A549 (cell line): ENCODE measurements at regions of chr14 and their contacts with region 1.

Region 1: DNA sequence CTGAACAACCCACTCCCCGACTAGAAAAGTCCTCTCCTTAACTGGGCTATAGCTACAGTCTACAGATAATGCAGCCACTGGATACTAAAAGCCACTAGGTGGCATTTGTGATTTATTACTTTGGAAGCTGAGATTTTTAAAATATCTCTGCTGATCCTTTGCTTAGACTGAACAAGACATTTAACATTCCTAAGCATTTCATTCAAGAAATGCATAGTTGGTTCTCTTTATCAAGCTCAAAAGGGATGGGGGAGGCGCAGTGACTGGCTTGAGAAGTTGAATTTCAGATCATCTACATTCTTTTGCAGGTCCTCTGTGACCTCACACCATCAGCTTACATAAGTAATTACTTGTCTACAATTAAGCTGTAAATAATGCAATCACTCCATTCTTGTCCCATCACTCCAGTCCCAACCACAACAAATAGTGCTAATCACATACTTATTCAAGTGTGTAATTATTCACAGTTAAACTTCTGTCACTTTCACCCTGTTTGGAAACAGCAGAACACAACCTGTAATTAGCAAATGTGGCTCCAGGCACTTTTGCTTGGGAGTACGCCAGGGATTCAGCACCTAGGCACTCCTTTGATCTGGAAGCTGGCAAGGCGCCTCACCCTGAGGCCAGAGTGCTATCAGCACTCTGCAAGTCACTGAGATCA is 203.6 kb downstream of the NOVA1 start:
- DNase-seq: peak in 1 of 2 experiments; percentile 8
- ATAC-seq: peak; percentile 68 to 78; a peak in 4 of 6 replicates
- H3K4me3 ChIP-seq: no peak overlapping the region
- H3K27ac ChIP-seq: no peak overlapping the region
- H3K4me1 ChIP-seq: peaks cover 6% of the 10 kb centered on the region; the same call in 1 of the 3 replicates
- CTCF ChIP-seq: peak; percentile 56
- EP300 ChIP-seq: no peak
- POLR2A ChIP-seq: no peak
- RAD21 ChIP-seq: peak; percentile 61 to 67

Region 2: GRCh38 chr14:26370115-26370514 is 24.2 kb before region 1 on chr14:
- CTCF ChIA-PET with region 1: no interaction called
- POLR2A ChIA-PET with region 1: no interaction called
- DNase-seq: no peak
- ATAC-seq: no peak
- H3K4me3 ChIP-seq: no peak overlapping the region
- H3K27ac ChIP-seq: no peak overlapping the region
- H3K4me1 ChIP-seq: no peaks in the 10 kb centered on the region
- CTCF ChIP-seq: no peak
- EP300 ChIP-seq: no peak
- POLR2A ChIP-seq: no peak
- RAD21 ChIP-seq: no peak

Region 3: GRCh38 chr14:26984311-26985177 is 590.3 kb after region 1 on chr14:
- CTCF ChIA-PET with region 1: interaction called, 20 read pairs
- POLR2A ChIA-PET with region 1: no interaction called
- DNase-seq: peak in 1 of 2 experiments; percentile 77
- ATAC-seq: peak; percentile 85 to 91; a peak in 5 of 6 replicates
- H3K4me3 ChIP-seq: no peak overlapping the region
- H3K27ac ChIP-seq: peak overlapping the region; percentile 28 to 56; a peak in 3 of 6 replicates
- H3K4me1 ChIP-seq: no peaks in the 10 kb centered on the region
- CTCF ChIP-seq: peak; percentile 81
- EP300 ChIP-seq: no peak
- POLR2A ChIP-seq: no peak
- RAD21 ChIP-seq: peak; percentile 84 to 89